CD8-positive, alpha-beta T cell (primary cell): ENCODE measurements at regions of chr11 and their contacts with region 1.

Region 1: GRCh38 chr11:64787526-64788320 is 9.4 kb upstream of the SF1 start:
- DNase-seq: peak in 7 of 9 experiments; percentile 42 to 75 (median 70)
- ATAC-seq: peak; percentile 84
- H3K4me3 ChIP-seq: no peak overlapping the region
- H3K4me3 Mint-ChIP-seq: no peak overlapping the region
- H3K27ac ChIP-seq: no peak overlapping the region
- H3K27ac Mint-ChIP-seq: peak overlapping the region; percentile 13
- H3K4me1 ChIP-seq: no peaks in the 10 kb centered on the region
- H3K4me1 Mint-ChIP-seq: peaks cover 8% of the 10 kb centered on the region
- H3K27me3 ChIP-seq: no peaks in the 10 kb centered on the region
- H3K27me3 Mint-ChIP-seq: no peaks in the 10 kb centered on the region
- CTCF ChIP-seq: peak; percentile 77

Region 2: DNA sequence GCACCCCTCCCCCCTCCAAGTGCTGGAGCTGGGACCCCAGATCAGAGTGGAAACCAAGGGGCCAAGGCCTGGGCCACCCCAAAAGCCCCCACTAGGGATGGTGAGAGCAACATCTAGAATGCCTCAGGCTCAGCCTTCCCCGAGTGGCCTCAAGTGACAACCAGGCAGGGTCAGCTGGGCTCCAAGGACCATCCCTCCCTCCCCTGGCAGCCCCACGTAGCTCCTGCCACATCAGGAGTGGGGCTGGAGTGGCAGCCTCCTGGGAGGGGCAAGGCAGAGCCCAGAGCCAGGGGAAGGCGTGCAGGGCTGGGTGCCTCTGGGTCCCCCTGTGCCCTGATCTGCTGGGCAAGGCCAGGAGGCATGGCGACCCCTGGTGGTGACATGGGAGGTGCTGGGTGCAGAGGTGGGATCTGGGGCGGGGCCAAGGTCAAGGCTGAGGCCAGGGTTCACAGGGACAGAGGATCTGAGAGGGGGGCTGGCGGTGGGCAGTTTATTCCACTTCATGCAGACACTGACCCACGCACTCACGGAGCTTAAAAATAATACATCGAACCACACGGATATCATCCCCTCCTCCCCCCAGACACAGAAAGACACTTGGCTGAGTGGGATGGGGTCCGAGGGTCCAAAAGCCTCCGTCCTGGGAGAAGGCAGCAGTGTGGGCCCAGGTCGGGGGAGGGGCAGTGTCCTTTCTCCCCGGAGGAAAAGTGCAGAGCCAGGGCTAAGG is 106.5 kb after region 1 on chr11:
- CTCF ChIA-PET with region 1: interaction called, 10 read pairs
- POLR2A ChIA-PET with region 1: interaction called, 3 read pairs
- intact Hi-C with region 1: loop called (anchors 1 kb)
- DNase-seq: peak; percentile 85 to 97 (median 92)
- ATAC-seq: peak; percentile 86
- H3K4me3 ChIP-seq: no peak overlapping the region
- H3K4me3 Mint-ChIP-seq: no peak overlapping the region
- H3K27ac ChIP-seq: no peak overlapping the region
- H3K27ac Mint-ChIP-seq: no peak overlapping the region
- H3K4me1 ChIP-seq: peaks cover 4% of the 10 kb centered on the region
- H3K4me1 Mint-ChIP-seq: peaks cover 2% of the 10 kb centered on the region
- H3K27me3 ChIP-seq: no peaks in the 10 kb centered on the region
- H3K27me3 Mint-ChIP-seq: no peaks in the 10 kb centered on the region
- CTCF ChIP-seq: peak; percentile 69